ENCODE measurements at regions of chr14 and their contacts with region 1.

Region 1: DNA sequence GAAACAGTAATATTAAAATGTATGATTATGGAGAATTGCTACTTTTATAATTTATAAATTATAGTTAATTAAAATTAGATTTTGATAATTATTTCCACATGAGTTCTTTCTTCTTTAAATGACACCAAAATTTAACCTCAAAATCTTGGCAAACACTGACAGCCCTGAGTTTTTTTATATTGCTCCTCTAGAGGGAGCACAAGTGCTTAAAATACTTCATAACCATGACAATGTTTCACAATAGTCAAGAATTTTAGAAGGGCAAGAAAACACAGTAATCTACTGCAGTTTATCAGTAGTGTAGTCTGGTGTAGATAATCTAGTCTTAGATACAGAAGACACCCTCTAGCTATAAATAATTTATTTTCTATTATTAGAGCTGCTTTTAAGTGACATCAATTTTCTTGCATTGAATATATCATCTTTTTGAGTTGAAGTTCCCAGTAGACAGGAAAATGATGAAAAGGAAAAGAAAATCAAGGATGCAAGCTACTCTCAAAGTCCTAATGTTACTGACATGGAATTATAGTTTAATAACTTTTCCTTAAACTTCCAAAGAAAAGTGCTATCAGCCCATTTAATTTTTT is 14.3 kb upstream of the PTGER2 start:
- DNase-seq: peak; percentile 26
- H3K4me3 ChIP-seq: no peak overlapping the region
- H3K27ac ChIP-seq: no peak overlapping the region
- H3K4me1 ChIP-seq: no peaks in the 10 kb centered on the region
- H3K27me3 ChIP-seq: no peaks in the 10 kb centered on the region
- CTCF ChIP-seq: peak; percentile 54 to 59

Region 2: DNA sequence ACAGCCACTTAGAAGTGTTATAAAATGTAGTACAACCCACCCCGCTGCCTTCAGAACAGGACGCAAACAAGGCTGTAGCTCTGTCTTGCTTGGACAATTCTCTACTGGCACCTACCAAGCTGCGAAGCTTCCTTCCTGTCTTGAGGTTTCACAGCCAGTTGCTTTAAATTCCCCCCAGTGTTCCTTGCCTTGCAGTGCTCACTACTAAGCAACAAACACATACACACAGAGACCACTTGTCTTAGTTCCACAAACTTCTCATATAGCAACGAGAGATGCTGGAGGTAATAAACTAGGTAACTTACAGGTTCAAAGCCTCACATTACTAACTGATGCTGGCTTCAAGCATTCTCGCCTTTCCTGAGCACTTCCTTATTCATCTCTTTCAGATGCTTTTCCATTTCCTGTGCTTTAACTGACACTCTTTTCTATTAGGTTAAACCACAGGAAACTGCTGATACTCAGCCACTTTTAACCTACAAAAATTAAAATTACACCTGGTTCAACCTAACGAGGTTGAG is 123.7 kb before region 1 on chr14:
- CTCF ChIA-PET with region 1: no interaction called
- dilution Hi-C with region 1: no loop called
- in situ Hi-C with region 1: no loop called
- intact Hi-C with region 1: no loop called
- DNase-seq: no peak
- H3K4me3 ChIP-seq: no peak overlapping the region
- H3K27ac ChIP-seq: no peak overlapping the region
- H3K4me1 ChIP-seq: no peaks in the 10 kb centered on the region
- H3K27me3 ChIP-seq: no peaks in the 10 kb centered on the region
- CTCF ChIP-seq: no peak

Region 3: DNA sequence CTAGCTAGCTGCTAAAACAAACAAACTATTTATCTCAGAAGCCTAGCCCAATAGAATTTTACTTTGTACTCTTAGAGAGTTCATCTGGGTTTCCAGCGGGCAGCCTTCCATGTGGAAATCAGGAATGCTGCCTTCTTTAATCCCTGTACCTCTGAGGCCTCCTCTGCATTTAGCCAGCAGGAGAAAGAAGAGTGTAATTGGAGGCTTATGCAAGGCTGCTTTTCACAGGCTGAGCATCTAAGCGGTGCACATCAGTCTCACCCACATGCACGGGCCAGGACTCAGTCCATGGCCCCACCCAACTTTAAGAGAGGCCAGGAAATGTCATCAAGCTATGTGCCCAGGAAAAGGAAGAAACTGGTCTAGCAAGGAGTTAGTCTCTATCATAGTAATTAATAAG is 46.3 kb before region 1 on chr14:
- CTCF ChIA-PET with region 1: no interaction called
- dilution Hi-C with region 1: no loop called
- in situ Hi-C with region 1: no loop called
- intact Hi-C with region 1: no loop called
- DNase-seq: no peak
- H3K4me3 ChIP-seq: no peak overlapping the region
- H3K27ac ChIP-seq: no peak overlapping the region
- H3K4me1 ChIP-seq: no peaks in the 10 kb centered on the region
- H3K27me3 ChIP-seq: no peaks in the 10 kb centered on the region
- CTCF ChIP-seq: no peak

Region 4: DNA sequence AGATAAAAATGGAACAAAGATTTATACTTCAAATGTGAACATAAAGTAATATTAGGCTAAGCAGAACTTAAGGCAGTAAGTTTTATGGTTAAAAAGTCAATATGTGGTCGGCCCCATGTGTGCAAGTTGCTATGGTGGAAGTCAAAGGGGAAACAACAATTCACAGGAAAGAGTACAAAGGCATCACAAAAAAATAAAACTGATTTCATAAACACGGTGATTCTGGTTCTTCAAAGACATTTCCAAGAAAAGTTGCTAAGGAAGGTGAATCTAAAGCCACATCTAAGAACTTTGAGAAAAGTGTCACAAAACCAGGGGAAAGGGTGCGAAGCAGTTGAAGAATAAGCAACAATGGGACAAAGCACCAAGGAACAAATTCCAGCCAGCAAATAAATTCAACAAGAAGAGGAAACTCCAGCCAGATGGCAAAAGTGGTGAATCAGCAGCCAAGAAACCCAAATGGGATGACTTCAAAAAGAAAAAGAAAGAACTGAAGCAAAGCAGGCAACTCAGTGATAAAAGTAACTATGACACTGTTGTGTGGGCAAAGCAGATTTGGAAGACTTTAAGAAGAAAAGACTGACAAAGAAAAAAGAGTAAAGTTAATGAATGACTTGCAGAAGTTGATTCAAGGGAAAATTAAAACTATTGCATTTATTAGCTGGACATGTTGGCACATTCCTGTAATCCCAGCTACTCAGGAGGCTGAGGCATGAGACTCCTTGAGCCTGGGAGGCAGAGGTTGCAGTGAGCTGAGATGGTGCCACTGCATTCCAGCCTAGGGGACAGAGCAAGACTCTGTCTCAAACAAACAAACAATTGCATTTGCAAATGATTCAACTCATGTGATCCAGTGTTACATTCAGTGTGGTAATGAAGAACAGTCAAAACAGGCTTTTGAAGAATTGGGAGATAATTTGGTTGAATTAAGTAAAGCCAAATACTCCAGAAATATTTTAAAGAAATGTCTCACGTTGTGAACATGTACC is 12.8 kb before region 1 on chr14:
- CTCF ChIA-PET with region 1: interaction called, 15 read pairs
- dilution Hi-C with region 1: no loop called
- in situ Hi-C with region 1: no loop called
- intact Hi-C with region 1: no loop called
- DNase-seq: no peak
- H3K4me3 ChIP-seq: no peak overlapping the region
- H3K27ac ChIP-seq: no peak overlapping the region
- H3K4me1 ChIP-seq: no peaks in the 10 kb centered on the region
- H3K27me3 ChIP-seq: peaks cover 3% of the 10 kb centered on the region
- CTCF ChIP-seq: no peak

Region 5: GRCh38 chr14:52413729-52414408 is 114.1 kb after region 1 on chr14:
- CTCF ChIA-PET with region 1: no interaction called
- dilution Hi-C with region 1: no loop called
- in situ Hi-C with region 1: no loop called
- intact Hi-C with region 1: loop called (anchors 5 kb)
- DNase-seq: no peak
- H3K4me3 ChIP-seq: no peak overlapping the region
- H3K27ac ChIP-seq: no peak overlapping the region
- H3K4me1 ChIP-seq: no peaks in the 10 kb centered on the region
- H3K27me3 ChIP-seq: no peaks in the 10 kb centered on the region
- CTCF ChIP-seq: no peak

Region 6: DNA sequence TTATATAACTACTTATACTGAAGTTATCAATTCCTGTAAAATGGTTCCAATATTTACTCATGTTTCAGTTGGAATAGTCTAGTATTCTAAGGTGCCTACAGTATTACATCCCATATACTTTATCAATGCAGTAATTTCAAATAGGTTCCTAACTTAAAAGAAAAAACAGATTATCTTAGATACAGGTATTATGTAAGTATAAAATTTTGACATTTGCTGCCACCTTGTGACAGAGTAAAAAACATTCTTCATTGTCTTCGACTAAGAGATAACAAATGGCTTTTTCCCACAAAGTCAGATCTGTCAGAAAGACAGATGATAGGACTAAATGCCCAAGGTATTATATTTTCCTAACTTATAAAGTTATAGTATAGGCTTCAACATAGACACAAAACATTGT is 173.8 kb after region 1 on chr14:
- CTCF ChIA-PET with region 1: no interaction called
- dilution Hi-C with region 1: loop called (anchors 25 kb)
- in situ Hi-C with region 1: loop called (anchors 5 to 10 kb)
- intact Hi-C with region 1: loop called (anchors 1 kb)
- DNase-seq: peak; percentile 31
- H3K4me3 ChIP-seq: no peak overlapping the region
- H3K27ac ChIP-seq: no peak overlapping the region
- H3K4me1 ChIP-seq: no peaks in the 10 kb centered on the region
- H3K27me3 ChIP-seq: no peaks in the 10 kb centered on the region
- CTCF ChIP-seq: peak; percentile 16 to 42

Region 7: DNA sequence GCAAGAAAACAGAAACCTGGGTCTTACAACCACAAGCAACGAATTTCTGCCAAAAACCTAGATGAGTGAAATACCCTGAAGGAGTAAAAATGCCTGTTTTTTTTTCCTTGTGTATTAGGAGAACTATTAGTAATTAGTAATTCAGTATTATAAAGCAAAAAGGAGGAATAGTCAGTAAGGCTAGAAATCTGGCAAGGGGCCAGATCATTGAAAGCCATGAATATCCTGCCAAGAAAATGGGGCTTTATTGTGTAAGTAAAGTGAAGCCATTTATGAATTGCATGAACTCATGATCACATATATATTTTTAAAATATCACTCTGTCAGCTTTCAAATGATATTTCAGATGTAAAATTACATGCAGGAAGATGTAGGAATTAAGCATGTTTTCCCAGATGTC is 194.7 kb after region 1 on chr14:
- CTCF ChIA-PET with region 1: no interaction called
- dilution Hi-C with region 1: loop called (anchors 25 kb)
- in situ Hi-C with region 1: no loop called
- intact Hi-C with region 1: no loop called
- DNase-seq: no peak
- H3K4me3 ChIP-seq: no peak overlapping the region
- H3K27ac ChIP-seq: no peak overlapping the region
- H3K4me1 ChIP-seq: peaks cover 7% of the 10 kb centered on the region
- H3K27me3 ChIP-seq: no peaks in the 10 kb centered on the region
- CTCF ChIP-seq: no peak

Region 8: DNA sequence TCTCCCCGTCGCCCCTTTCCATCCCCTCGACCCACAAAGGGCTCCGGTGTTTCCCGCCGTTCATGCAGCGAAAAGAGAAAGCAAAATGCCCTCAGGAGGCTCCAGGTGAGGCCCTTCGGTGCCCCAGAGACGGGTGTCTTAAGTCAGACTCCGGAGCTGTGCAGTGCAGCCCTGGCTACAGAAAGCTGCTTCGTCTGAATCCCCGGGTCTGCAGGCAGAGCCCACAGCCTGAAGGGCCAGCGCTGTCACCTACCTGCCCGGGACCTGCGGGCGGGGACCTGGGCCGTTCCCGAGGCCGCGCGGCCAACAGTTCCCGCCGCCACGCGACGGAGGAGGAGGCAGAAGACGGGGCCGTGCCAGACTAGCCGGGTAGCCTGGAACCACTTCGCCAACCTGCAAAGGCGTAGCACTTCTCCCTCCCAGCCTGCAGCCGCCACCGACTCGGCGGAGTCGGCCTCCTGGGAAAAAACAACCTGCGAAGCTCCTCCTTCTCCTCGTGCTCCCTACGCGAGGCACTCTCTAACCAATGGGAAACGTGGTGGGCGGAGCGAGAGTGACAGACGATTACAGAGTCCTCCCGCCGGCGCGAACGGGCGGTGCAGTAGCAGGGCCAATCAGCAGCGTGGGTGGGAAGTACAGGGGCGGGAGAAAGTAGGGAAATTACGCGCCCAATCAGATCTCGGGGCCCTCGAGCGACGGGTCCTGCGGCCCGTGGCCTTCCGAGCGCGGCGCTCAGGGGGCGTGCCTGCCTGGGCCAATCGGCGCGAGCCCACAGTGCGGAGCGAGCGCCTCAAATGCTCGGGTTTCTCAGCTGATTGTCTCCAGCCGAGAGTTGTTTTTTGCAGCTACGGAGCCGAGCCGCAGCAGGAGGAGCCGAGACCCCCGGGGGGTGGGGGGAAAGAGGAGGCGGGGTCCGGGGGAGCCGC is 252.5 kb after region 1 on chr14 and contains the starts of genes GPR137C and TXNDC16:
- CTCF ChIA-PET with region 1: no interaction called
- dilution Hi-C with region 1: no loop called
- in situ Hi-C with region 1: no loop called
- intact Hi-C with region 1: loop called (anchors 5 kb)
- DNase-seq: peak; percentile 100
- H3K4me3 ChIP-seq: peak within 1 kb of the TSS; percentile 78 to 98 (median 90)
- H3K27ac ChIP-seq: peak within 1 kb of the TSS; percentile 73
- H3K4me1 ChIP-seq: peaks cover 22% of the 10 kb centered on the region
- H3K27me3 ChIP-seq: no peaks in the 10 kb centered on the region
- CTCF ChIP-seq: no peak
- total RNA-seq, gene GPR137C: 0.17 to 0.64 TPM
- total RNA-seq, gene TXNDC16: 4.0 to 4.2 TPM